Activated naive CD4-positive, alpha-beta T cell treated with anti-CD3 and anti-CD28 coated beads for 36 hours (primary cell): ENCODE measurements at regions of chr14 and their contacts with region 1.

Region 1: DNA sequence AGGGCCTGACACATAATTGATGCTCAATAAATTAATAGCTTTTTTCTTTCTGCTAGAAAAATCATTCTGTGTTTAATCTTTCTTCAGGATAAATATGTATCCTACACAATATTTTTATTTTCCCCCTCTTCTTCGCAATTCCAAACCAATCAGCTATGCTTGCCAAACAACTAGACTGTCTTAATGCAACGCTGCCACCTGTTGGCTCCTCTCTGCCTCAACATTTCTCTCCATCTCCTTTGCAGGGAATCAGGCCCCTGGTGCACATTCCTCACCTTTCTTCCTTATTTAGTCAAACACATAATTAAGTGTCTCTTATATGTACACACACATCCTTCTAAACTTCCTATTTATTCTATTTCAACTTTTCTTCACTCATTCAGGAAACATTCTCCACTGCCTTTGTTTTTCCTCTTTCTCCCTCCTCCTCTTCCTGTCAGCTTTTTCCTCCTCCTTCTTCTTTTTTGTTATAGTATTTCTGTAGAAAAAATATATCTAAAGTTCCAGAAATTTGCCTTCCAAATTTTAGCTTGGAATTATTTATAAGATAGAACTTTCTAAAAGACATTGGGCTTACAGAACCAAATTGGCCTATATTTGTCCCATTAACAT is 406.0 kb downstream of the PRKD1 start:
- DNase-seq: peak; percentile 26
- H3K4me3 Mint-ChIP-seq: no peak overlapping the region
- H3K27ac Mint-ChIP-seq: no peak overlapping the region
- H3K4me1 Mint-ChIP-seq: no peaks in the 10 kb centered on the region
- H3K27me3 Mint-ChIP-seq: no peaks in the 10 kb centered on the region

Region 2: GRCh38 chr14:29016050-29016900 is 505.4 kb before region 1 on chr14:
- CTCF ChIA-PET with region 1: no interaction called
- intact Hi-C with region 1: loop called (anchors 5 kb)
- DNase-seq: peak; percentile 25
- H3K4me3 Mint-ChIP-seq: no peak overlapping the region
- H3K27ac Mint-ChIP-seq: no peak overlapping the region
- H3K4me1 Mint-ChIP-seq: no peaks in the 10 kb centered on the region
- H3K27me3 Mint-ChIP-seq: no peaks in the 10 kb centered on the region

Region 3: GRCh38 chr14:29569194-29569593 is 47.6 kb after region 1 on chr14:
- CTCF ChIA-PET with region 1: no interaction called
- intact Hi-C with region 1: no loop called
- DNase-seq: no peak
- H3K4me3 Mint-ChIP-seq: no peak overlapping the region
- H3K27ac Mint-ChIP-seq: no peak overlapping the region
- H3K4me1 Mint-ChIP-seq: no peaks in the 10 kb centered on the region
- H3K27me3 Mint-ChIP-seq: no peaks in the 10 kb centered on the region